ENCODE measurements at regions of chr5 and their contacts with region 1.

Region 1: GRCh38 chr5:149636851-149637246 is 55.6 kb downstream of the ARHGEF37 start:
- DNase-seq: peak; percentile 82
- H3K4me3 Mint-ChIP-seq: no peak overlapping the region
- H3K27ac Mint-ChIP-seq: no peak overlapping the region
- H3K4me1 Mint-ChIP-seq: peaks cover 61% of the 10 kb centered on the region
- H3K27me3 Mint-ChIP-seq: no peaks in the 10 kb centered on the region
- CTCF ChIP-seq: peak; percentile 83

Region 2: GRCh38 chr5:149775785-149776184 is 138.9 kb after region 1 on chr5:
- CTCF ChIA-PET with region 1: interaction called, 3 read pairs
- intact Hi-C with region 1: loop called (anchors 2 kb)
- DNase-seq: peak; percentile 33
- H3K4me3 Mint-ChIP-seq: no peak overlapping the region
- H3K27ac Mint-ChIP-seq: no peak overlapping the region
- H3K4me1 Mint-ChIP-seq: peaks cover 52% of the 10 kb centered on the region
- H3K27me3 Mint-ChIP-seq: no peaks in the 10 kb centered on the region
- CTCF ChIP-seq: peak; percentile 65

Region 3: DNA sequence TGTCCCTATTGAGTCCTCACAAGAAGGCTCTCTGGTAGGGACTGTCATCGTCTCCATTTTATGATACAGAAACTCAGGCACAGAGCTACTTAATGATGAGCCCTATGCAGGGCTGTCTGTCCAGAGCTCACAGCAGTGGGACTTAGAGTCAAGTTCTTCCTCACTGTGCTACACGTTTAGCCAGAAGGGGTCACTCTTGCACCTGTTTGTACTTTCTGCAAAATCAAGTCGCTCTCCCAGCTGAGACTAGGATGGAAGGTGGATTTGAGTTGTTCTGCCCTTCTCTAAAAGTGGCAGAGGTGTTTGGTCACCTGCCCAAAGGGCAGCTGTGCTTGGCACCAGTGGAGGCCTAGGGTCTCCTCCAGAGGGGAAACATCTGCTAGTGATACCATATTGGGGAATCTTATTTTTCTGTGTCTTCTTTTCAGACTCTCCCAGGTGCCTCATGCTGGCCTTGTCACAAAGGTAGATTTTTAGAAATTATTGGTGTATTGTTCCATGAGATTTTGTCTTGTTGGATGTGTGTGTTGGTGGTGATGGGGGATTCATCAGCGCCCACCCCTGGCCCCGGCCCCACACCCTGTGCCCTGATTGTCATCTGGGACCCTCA is 197.5 kb after region 1 on chr5:
- CTCF ChIA-PET with region 1: interaction called, 12 read pairs
- intact Hi-C with region 1: no loop called
- DNase-seq: peak; percentile 79
- H3K4me3 Mint-ChIP-seq: no peak overlapping the region
- H3K27ac Mint-ChIP-seq: no peak overlapping the region
- H3K4me1 Mint-ChIP-seq: no peaks in the 10 kb centered on the region
- H3K27me3 Mint-ChIP-seq: no peaks in the 10 kb centered on the region
- CTCF ChIP-seq: peak; percentile 73

Region 4: GRCh38 chr5:149990518-149991376 is 353.9 kb after region 1 on chr5:
- CTCF ChIA-PET with region 1: interaction called, 4 read pairs
- intact Hi-C with region 1: loop called (anchors 1 kb)
- DNase-seq: peak; percentile 80
- H3K4me3 Mint-ChIP-seq: no peak overlapping the region
- H3K27ac Mint-ChIP-seq: peak overlapping the region; percentile 27
- H3K4me1 Mint-ChIP-seq: peaks cover 13% of the 10 kb centered on the region
- H3K27me3 Mint-ChIP-seq: no peaks in the 10 kb centered on the region
- CTCF ChIP-seq: peak; percentile 89

Region 5: DNA sequence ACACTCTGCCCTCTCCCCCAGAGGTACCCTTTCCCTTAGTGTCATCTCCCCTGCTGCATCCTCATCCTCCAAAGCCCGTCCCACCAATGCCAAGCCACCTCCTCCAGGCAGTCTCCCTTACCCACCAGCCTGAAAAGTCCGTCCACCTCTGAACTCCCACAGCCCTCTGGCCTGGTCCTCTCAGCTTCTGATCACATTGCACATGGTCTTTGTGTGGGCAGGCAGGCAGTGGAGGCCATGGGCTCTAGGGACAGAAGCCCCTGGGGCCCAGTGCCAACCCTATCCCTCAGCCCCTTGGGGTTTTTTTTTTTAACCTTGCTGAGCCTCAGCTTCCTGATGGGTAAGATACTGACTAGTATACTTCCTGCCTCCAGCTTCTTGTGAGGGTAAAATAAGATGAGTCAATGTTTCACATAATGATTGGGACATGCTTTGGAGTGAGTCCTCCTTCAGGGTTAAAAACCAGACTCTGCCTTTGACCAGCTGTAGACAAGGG is 430.1 kb after region 1 on chr5:
- CTCF ChIA-PET with region 1: no interaction called
- intact Hi-C with region 1: no loop called
- DNase-seq: no peak
- H3K4me3 Mint-ChIP-seq: no peak overlapping the region
- H3K27ac Mint-ChIP-seq: no peak overlapping the region
- H3K4me1 Mint-ChIP-seq: peaks cover 8% of the 10 kb centered on the region
- H3K27me3 Mint-ChIP-seq: peaks cover 55% of the 10 kb centered on the region
- CTCF ChIP-seq: no peak

Measured in Calu3 (cell line).